Dorsolateral prefrontal cortex (tissue), 120 donors: ENCODE measurements at regions of chr15 and their contacts with region 1.

Region 1: DNA sequence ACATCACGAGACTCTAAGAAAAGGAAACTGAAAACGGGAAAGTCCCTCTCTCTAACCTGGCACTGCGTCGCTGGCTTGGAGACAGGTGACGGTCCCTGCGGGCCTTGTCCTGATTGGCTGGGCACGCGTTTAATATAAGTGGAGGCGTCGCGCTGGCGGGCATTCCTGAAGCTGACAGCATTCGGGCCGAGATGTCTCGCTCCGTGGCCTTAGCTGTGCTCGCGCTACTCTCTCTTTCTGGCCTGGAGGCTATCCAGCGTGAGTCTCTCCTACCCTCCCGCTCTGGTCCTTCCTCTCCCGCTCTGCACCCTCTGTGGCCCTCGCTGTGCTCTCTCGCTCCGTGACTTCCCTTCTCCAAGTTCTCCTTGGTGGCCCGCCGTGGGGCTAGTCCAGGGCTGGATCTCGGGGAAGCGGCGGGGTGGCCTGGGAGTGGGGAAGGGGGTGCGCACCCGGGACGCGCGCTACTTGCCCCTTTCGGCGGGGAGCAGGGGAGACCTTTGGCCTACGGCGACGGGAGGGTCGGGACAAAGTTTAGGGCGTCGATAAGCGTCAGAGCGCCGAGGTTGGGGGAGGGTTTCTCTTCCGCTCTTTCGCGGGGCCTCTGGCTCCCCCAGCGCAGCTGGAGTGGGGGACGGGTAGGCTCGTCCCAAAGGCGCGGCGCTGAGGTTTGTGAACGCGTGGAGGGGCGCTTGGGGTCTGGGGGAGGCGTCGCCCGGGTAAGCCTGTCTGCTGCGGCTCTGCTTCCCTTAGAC is at the start of gene B2M:
- DNase-seq: peak; percentile 92 to 97 (median 96)
- H3K4me3 ChIP-seq: peak within 1 kb of the TSS; percentile 41 to 99 (median 90)
- H3K27ac ChIP-seq: peak within 1 kb of the TSS; percentile 59 to 99 (median 94)
- H3K27me3 ChIP-seq: no peaks in the 10 kb centered on the region
- CTCF ChIP-seq: peak in 17 of 56 donors; percentile 0 to 53 (median 14)
- total RNA-seq, gene B2M: 213 to 1,235 (median 449) TPM

Region 2: GRCh38 chr15:44482088-44482487 is 229.4 kb before region 1 on chr15:
- intact Hi-C with region 1: no loop called
- DNase-seq: no peak
- H3K4me3 ChIP-seq: no peak overlapping the region
- H3K27ac ChIP-seq: no peak overlapping the region
- H3K27me3 ChIP-seq: no peaks in the 10 kb centered on the region
- CTCF ChIP-seq: no peak

Region 3: DNA sequence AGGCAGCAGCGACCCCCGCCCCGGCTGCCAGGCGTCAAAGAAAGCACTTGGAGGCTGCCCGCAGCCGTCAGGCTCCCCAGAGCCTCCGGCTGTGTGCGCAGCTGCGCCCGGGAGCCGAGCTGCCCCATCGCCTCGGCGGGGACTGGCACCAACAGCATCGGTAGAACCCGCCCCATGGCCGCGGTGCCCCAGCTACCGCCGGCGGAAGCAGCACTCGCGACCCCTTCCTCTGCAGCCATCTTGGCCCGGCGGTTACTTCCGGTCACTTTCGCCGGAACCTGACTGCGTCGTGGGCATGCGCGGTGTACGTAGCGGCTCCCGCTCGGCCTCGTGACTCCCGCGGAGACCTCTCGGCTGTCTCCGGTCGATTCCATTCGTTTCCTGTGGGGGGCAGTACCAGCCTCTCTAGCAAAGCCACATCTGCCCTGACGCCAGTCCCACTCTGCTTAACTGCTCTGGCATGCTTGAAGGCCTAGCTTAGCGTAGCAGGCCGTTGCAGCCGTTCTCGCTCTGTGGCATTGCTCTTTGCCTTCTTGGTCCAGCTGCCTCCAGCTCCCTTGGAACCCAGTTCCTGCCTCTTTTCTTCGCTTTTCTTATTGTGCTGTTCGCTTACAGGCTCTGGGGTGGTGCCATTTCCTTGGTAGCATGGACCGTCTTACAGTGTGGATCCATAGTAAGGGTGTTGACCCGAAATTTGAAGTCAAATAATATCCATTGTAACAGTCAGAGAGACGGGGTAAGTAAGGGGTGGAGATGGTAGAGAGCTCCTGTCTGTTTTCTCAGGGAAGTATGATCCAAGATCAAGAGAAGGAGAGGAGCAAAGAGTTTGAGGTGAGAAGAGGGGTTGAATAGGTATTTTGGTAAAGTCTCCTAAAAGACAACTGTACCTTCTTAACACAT is 47.9 kb before region 1 on chr15 and contains the start of gene SPG11:
- intact Hi-C with region 1: loop called (anchors 5 kb)
- DNase-seq: peak; percentile 93 to 98 (median 96)
- H3K4me3 ChIP-seq: peak within 1 kb of the TSS; percentile 61 to 100 (median 96)
- H3K27ac ChIP-seq: peak within 1 kb of the TSS; percentile 78 to 99 (median 97)
- H3K27me3 ChIP-seq: no peaks in the 10 kb centered on the region
- CTCF ChIP-seq: peak; percentile 86 to 99 (median 97)
- total RNA-seq, gene SPG11: 41.3 to 116 (median 77.5) TPM

Region 4: DNA sequence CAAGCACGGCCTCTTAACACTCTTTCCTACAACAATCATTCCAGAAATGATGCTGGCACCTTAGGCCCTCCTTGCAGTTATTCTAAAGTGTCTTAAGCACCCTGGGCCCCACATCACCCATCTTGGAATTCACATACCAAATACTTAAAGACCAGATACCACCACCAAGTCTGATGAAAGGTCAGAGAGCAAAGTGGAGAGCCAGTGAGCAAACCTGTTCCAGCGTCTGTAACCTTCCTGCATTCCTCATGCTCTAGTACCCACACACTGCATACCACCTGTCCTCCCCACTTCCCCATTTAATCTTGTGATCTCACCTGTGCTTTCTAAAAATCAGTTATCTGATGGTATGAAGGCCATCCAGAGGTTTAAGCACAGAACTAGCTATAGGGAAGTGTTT is 41.0 kb before region 1 on chr15:
- intact Hi-C with region 1: loop called in 1 of 2 experiments (anchors 5 kb)
- DNase-seq: no peak
- H3K4me3 ChIP-seq: no peak overlapping the region
- H3K27ac ChIP-seq: no peak overlapping the region
- H3K27me3 ChIP-seq: no peaks in the 10 kb centered on the region
- CTCF ChIP-seq: no peak

Region 5: GRCh38 chr15:44728576-44729407 is 17.3 kb after region 1 on chr15:
- intact Hi-C with region 1: loop called (anchors 1 to 2 kb)
- DNase-seq: peak; percentile 89 to 99 (median 95)
- H3K4me3 ChIP-seq: peak overlapping the region; percentile 33 to 97 (median 85)
- H3K27ac ChIP-seq: peak overlapping the region; percentile 78 to 100 (median 97)
- H3K27me3 ChIP-seq: no peaks in the 10 kb centered on the region
- CTCF ChIP-seq: peak in 21 of 56 donors; percentile 6 to 55 (median 20)

Region 6: GRCh38 chr15:44788748-44789147 is 77.2 kb after region 1 on chr15:
- intact Hi-C with region 1: loop called in 1 of 2 experiments (anchors 2 kb)
- DNase-seq: no peak
- H3K4me3 ChIP-seq: no peak overlapping the region
- H3K27ac ChIP-seq: no peak overlapping the region
- H3K27me3 ChIP-seq: no peaks in the 10 kb centered on the region
- CTCF ChIP-seq: no peak